K562 (cell line): ENCODE measurements at regions of chr6 and their contacts with region 1.

Region 1: DNA sequence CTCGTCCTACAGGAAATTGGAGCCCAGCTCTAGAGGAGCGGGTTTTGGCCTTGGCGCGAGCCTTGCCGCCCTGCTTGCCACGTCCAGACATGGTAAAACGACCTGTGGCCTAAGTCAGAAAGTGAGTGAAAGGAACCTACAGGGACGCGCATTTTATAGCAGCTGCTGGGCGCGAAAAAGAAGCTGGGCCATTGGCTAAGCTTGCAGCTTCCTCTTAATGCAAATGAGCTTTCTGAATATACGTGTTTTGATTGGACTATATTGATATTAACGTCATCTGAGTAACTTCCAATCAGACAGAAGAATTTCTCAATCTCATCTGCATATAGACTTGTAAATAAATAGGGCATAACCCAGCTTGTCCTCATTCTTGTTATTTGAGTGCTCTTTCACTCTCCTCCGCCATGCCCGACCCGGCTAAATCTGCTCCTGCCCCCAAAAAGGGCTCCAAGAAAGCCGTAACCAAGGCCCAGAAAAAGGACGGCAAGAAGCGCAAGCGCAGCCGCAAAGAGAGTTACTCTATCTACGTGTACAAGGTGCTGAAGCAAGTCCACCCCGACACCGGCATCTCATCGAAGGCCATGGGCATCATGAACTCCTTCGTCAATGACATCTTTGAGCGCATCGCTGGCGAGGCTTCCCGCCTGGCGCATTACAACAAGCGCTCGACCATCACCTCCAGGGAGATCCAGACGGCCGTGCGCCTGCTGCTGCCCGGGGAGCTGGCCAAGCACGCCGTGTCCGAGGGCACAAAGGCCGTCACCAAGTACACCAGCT is 18.9 kb downstream of the OR2B2 start:
- DNase-seq: peak; percentile 84 to 99 (median 92)
- ATAC-seq: peak; percentile 71
- H3K4me3 ChIP-seq: peak overlapping the region; percentile 79
- H3K27ac ChIP-seq: peak overlapping the region; percentile 95
- H3K4me1 ChIP-seq: peaks cover 19 to 38% of the 10 kb centered on the region in 2 experiments
- H3K27me3 ChIP-seq: no peaks in the 10 kb centered on the region
- CTCF ChIP-seq: peak in 1 of 3 experiments; percentile 14; a peak in 1 of 6 replicates
- EP300 ChIP-seq: peak; percentile 62; the same call in 1 of the 2 replicates
- POLR2A ChIP-seq: peak; percentile 100
- RAD21 ChIP-seq: no peak

Region 2: GRCh38 chr6:27132532-27133280 is 760.5 kb before region 1 on chr6:
- CTCF ChIA-PET with region 1: no interaction called
- POLR2A ChIA-PET with region 1: interaction called, 71 read pairs
- in situ Hi-C with region 1: no loop called
- intact Hi-C with region 1: loop called (anchors 1 kb)
- DNase-seq: peak; percentile 93 to 100 (median 97)
- ATAC-seq: peak; percentile 68
- H3K4me3 ChIP-seq: peak overlapping the region; percentile 72
- H3K27ac ChIP-seq: peak overlapping the region; percentile 98
- H3K4me1 ChIP-seq: peaks cover 6 to 7% of the 10 kb centered on the region in 2 experiments
- H3K27me3 ChIP-seq: no peaks in the 10 kb centered on the region
- CTCF ChIP-seq: peak in 1 of 3 experiments; percentile 7; a peak in 1 of 6 replicates
- EP300 ChIP-seq: peak; percentile 26; the same call in 1 of the 2 replicates
- POLR2A ChIP-seq: peak; percentile 100
- RAD21 ChIP-seq: peak in 1 of 2 experiments; percentile 36; a peak in 2 of 4 replicates

Region 3: GRCh38 chr6:27188885-27189418 is 704.3 kb before region 1 on chr6:
- CTCF ChIA-PET with region 1: interaction called, 4 read pairs
- POLR2A ChIA-PET with region 1: no interaction called
- in situ Hi-C with region 1: no loop called
- intact Hi-C with region 1: loop called (anchors 2 kb)
- DNase-seq: peak; percentile 69 to 93 (median 78)
- ATAC-seq: peak; percentile 85
- H3K4me3 ChIP-seq: peak overlapping the region; percentile 56
- H3K27ac ChIP-seq: peak overlapping the region; percentile 80
- H3K4me1 ChIP-seq: peaks cover 8% of the 10 kb centered on the region in 2 experiments; a peak in 4 of 5 replicates
- H3K27me3 ChIP-seq: no peaks in the 10 kb centered on the region
- CTCF ChIP-seq: peak; percentile 78 to 92 (median 85)
- EP300 ChIP-seq: no peak; the same call in 1 of the 2 replicates
- POLR2A ChIP-seq: no peak
- RAD21 ChIP-seq: peak; percentile 93 to 95

Region 4: GRCh38 chr6:27753668-27754407 is 139.4 kb before region 1 on chr6:
- CTCF ChIA-PET with region 1: interaction called, 4 read pairs
- POLR2A ChIA-PET with region 1: interaction called, 11 read pairs
- in situ Hi-C with region 1: no loop called
- intact Hi-C with region 1: loop called (anchors 2 kb)
- DNase-seq: peak; percentile 84 to 98 (median 89)
- ATAC-seq: peak; percentile 93
- H3K4me3 ChIP-seq: peak overlapping the region; percentile 67
- H3K27ac ChIP-seq: peak overlapping the region; percentile 44; the same call in 2 of the 3 replicates
- H3K4me1 ChIP-seq: peaks cover 14 to 16% of the 10 kb centered on the region in 2 experiments; a peak in 4 of 5 replicates
- H3K27me3 ChIP-seq: no peaks in the 10 kb centered on the region
- CTCF ChIP-seq: peak; percentile 49 to 61 (median 55)
- EP300 ChIP-seq: peak; percentile 13
- POLR2A ChIP-seq: peak; percentile 67
- RAD21 ChIP-seq: peak in 1 of 2 experiments; percentile 30; a peak in 1 of 4 replicates

Region 5: DNA sequence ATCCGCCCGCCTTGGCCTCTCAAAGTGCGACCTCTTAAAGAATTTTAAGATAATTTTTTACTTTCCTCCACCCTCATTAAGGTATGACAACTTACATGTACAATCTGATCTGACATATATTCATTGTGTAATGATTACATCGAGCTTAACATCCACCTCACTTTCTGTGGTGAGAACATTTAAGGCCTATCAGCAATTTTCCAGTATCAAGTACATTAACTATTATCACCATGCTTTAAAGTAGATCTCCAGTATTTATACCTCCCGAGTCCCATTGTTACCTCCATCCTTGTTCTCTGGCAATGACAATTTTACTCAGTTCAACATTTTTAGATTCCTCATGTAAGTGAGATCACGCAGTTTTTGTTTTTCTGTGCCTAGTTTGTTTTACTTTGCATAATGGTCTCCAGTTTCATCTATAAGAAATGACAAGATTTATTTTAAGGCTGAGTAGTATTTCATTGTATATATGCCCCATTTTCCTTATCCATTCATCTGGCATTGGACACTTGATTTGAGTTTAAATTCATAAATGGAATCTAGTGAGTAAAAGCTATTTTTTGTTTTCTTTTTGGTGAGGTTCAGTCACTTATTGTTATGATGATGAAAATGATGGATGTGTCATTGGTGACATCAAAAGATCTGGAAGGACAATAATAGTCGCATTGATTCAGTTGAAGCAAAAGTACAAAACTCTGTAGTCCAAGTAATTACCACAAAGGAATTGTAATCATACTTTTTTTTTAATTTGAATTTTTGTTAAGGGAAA is 68.0 kb before region 1 on chr6:
- CTCF ChIA-PET with region 1: no interaction called
- POLR2A ChIA-PET with region 1: interaction called, 826 read pairs
- in situ Hi-C with region 1: no loop called
- intact Hi-C with region 1: no loop called
- DNase-seq: peak in 1 of 4 experiments; percentile 12
- ATAC-seq: no peak
- H3K4me3 ChIP-seq: peak overlapping the region; percentile 50
- H3K27ac ChIP-seq: peak overlapping the region; percentile 83
- H3K4me1 ChIP-seq: peaks cover 0 to 8% of the 10 kb centered on the region in 2 experiments; a peak in 3 of 5 replicates
- H3K27me3 ChIP-seq: no peaks in the 10 kb centered on the region
- CTCF ChIP-seq: no peak
- EP300 ChIP-seq: no peak
- POLR2A ChIP-seq: peak; percentile 38
- RAD21 ChIP-seq: no peak

Region 6: GRCh38 chr6:27864906-27865849 is 28.1 kb before region 1 on chr6:
- CTCF ChIA-PET with region 1: no interaction called
- POLR2A ChIA-PET with region 1: interaction called, 306 read pairs
- in situ Hi-C with region 1: no loop called
- intact Hi-C with region 1: loop called (anchors 1 kb)
- DNase-seq: peak; percentile 38 to 84 (median 68)
- ATAC-seq: peak; percentile 49
- H3K4me3 ChIP-seq: peak overlapping the region; percentile 45
- H3K27ac ChIP-seq: peak overlapping the region; percentile 73
- H3K4me1 ChIP-seq: peaks cover 15 to 16% of the 10 kb centered on the region in 2 experiments; a peak in 4 of 5 replicates
- H3K27me3 ChIP-seq: no peaks in the 10 kb centered on the region
- CTCF ChIP-seq: no peak
- EP300 ChIP-seq: no peak
- POLR2A ChIP-seq: peak; percentile 96
- RAD21 ChIP-seq: no peak

Region 7: DNA sequence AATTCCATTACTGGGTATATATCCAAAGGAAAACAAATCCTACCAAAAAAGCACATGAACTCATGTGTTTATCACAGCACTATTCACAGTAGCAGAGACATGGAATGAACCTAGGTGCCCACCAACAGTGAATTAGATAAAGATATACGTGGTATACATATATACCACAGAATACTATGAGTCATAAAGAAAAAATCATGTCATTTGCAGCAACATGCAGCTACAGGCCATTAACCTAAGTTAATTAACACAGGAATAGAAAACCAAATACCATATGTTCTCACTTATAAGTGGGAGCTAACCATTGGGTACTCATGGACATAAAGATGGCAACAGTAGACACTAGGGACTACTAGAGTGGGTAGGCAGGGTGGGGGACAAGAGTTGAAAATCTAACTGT is 14.8 kb after region 1 on chr6:
- CTCF ChIA-PET with region 1: no interaction called
- POLR2A ChIA-PET with region 1: interaction called, 10 read pairs
- in situ Hi-C with region 1: no loop called
- intact Hi-C with region 1: no loop called
- DNase-seq: no peak
- ATAC-seq: no peak
- H3K4me3 ChIP-seq: no peak overlapping the region
- H3K27ac ChIP-seq: no peak overlapping the region
- H3K4me1 ChIP-seq: peaks cover 4 to 8% of the 10 kb centered on the region in 2 experiments; a peak in 4 of 5 replicates
- H3K27me3 ChIP-seq: no peaks in the 10 kb centered on the region
- CTCF ChIP-seq: no peak
- EP300 ChIP-seq: no peak
- POLR2A ChIP-seq: no peak
- RAD21 ChIP-seq: no peak